SK-N-SH (cell line): ENCODE measurements at regions of chr4 and their contacts with region 1.

Region 1: GRCh38 chr4:37603070-37603468 is 83.1 kb downstream of the RELL1 start:
- DNase-seq: peak; percentile 85
- H3K4me3 ChIP-seq: peak overlapping the region in 1 of 2 experiments; percentile 10; a peak in 1 of 4 replicates
- H3K27ac ChIP-seq: no peak overlapping the region
- H3K4me1 ChIP-seq: peaks cover 4% of the 10 kb centered on the region in 2 experiments; a peak in 1 of 4 replicates
- H3K27me3 ChIP-seq: no peaks in the 10 kb centered on the region
- CTCF ChIP-seq: peak; percentile 96
- EP300 ChIP-seq: no peak
- RAD21 ChIP-seq: peak; percentile 96

Region 2: GRCh38 chr4:37324546-37324945 is 278.5 kb before region 1 on chr4:
- CTCF ChIA-PET with region 1: no interaction called
- POLR2A ChIA-PET with region 1: no interaction called
- DNase-seq: no peak
- H3K4me3 ChIP-seq: no peak overlapping the region
- H3K27ac ChIP-seq: no peak overlapping the region
- H3K4me1 ChIP-seq: no peaks in the 10 kb centered on the region
- H3K27me3 ChIP-seq: no peaks in the 10 kb centered on the region
- CTCF ChIP-seq: no peak
- EP300 ChIP-seq: no peak
- RAD21 ChIP-seq: no peak

Region 3: DNA sequence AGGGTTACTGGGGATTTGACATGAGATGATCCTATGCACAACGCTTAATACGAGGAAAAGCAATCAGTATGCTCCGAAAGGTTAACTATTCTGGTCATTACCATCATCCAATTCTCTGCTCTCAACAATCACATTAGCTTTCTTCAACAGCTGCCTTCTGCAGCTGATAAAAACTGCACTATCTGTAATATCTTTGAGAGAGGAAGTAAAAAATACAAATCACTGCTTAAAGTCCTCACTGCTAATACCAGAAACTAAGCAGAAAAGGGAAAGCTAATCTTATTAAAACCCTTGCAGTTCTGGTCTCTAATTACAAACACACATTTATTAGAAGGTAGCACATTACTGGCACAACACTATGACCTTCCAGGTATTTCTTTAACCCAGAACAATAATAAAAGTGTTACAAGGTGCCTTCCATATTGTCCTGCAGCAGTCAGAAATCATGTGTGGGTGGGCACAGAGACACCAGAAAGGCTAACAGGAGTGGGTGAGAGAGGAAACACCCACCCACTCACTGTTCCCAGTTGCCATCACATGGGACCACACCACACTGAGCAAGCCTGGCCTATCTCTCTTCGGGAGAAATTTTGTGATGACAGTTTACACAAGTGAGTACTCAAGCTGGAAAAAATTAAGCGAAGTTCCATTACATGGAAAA is 12.1 kb after region 1 on chr4:
- CTCF ChIA-PET with region 1: interaction called, 55 read pairs
- POLR2A ChIA-PET with region 1: no interaction called
- DNase-seq: peak; percentile 69
- H3K4me3 ChIP-seq: no peak overlapping the region
- H3K27ac ChIP-seq: peak overlapping the region in 1 of 2 experiments; percentile 95; a peak in 2 of 4 replicates
- H3K4me1 ChIP-seq: peaks cover 0 to 28% of the 10 kb centered on the region in 2 experiments; a peak in 3 of 4 replicates
- H3K27me3 ChIP-seq: no peaks in the 10 kb centered on the region
- CTCF ChIP-seq: no peak
- EP300 ChIP-seq: peak in 1 of 2 experiments; percentile 88; a peak in 2 of 4 replicates
- RAD21 ChIP-seq: peak; percentile 7; the same call in 1 of the 2 replicates

Region 4: GRCh38 chr4:37780444-37781150 is 177.5 kb after region 1 on chr4:
- CTCF ChIA-PET with region 1: interaction called, 10 read pairs
- POLR2A ChIA-PET with region 1: no interaction called
- DNase-seq: no peak
- H3K4me3 ChIP-seq: no peak overlapping the region
- H3K27ac ChIP-seq: no peak overlapping the region
- H3K4me1 ChIP-seq: no peaks in the 10 kb centered on the region
- H3K27me3 ChIP-seq: no peaks in the 10 kb centered on the region; the same call in 1 of the 2 replicates
- CTCF ChIP-seq: no peak
- EP300 ChIP-seq: no peak
- RAD21 ChIP-seq: peak; percentile 26; the same call in 1 of the 2 replicates

Region 5: GRCh38 chr4:37788819-37789218 is 185.8 kb after region 1 on chr4:
- CTCF ChIA-PET with region 1: interaction called, 201 read pairs
- POLR2A ChIA-PET with region 1: no interaction called
- DNase-seq: no peak
- H3K4me3 ChIP-seq: no peak overlapping the region
- H3K27ac ChIP-seq: no peak overlapping the region
- H3K4me1 ChIP-seq: no peaks in the 10 kb centered on the region
- H3K27me3 ChIP-seq: peaks cover 15% of the 10 kb centered on the region; the same call in 1 of the 2 replicates
- CTCF ChIP-seq: no peak
- EP300 ChIP-seq: no peak
- RAD21 ChIP-seq: no peak

Region 6: DNA sequence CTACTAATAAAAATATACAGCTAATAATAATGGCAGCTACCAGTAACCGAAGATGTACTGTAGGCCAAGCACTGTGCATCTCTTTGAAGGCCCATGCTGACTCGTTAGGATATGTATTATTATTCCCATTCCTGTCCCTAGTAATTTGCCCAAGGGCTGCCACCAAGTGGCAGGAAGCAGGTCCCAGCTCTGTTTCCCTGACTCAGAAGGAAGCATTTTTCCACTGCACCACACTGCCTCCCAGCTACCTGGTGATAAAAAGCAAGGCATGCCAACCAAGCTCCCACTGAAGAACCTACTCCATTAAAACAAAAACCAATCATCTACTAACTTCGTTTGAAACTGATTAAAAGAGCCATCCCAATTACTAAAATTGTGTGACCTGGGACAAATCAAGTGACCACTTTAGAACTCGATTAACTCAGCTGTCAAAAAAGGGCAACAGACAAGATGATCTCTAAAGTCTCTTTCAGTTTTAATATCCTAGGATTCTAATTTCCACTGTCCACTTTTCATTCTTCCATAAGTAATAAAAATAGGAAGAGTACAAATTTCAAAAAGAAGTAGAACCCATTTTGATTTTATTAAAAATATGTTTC is 199.1 kb after region 1 on chr4:
- CTCF ChIA-PET with region 1: interaction called, 201 read pairs
- POLR2A ChIA-PET with region 1: no interaction called
- DNase-seq: peak; percentile 63
- H3K4me3 ChIP-seq: no peak overlapping the region; a peak in 1 of 4 replicates
- H3K27ac ChIP-seq: no peak overlapping the region
- H3K4me1 ChIP-seq: no peaks in the 10 kb centered on the region
- H3K27me3 ChIP-seq: no peaks in the 10 kb centered on the region
- CTCF ChIP-seq: peak; percentile 70
- EP300 ChIP-seq: peak in 1 of 2 experiments; percentile 21; a peak in 1 of 4 replicates
- RAD21 ChIP-seq: peak; percentile 91

Region 7: GRCh38 chr4:38030023-38030422 is 427.0 kb after region 1 on chr4:
- CTCF ChIA-PET with region 1: interaction called, 29 read pairs
- POLR2A ChIA-PET with region 1: no interaction called
- DNase-seq: no peak
- H3K4me3 ChIP-seq: no peak overlapping the region
- H3K27ac ChIP-seq: no peak overlapping the region; a peak in 1 of 4 replicates
- H3K4me1 ChIP-seq: no peaks in the 10 kb centered on the region; a peak in 1 of 4 replicates
- H3K27me3 ChIP-seq: no peaks in the 10 kb centered on the region
- CTCF ChIP-seq: no peak
- EP300 ChIP-seq: no peak
- RAD21 ChIP-seq: no peak

Region 8: GRCh38 chr4:38034986-38035882 is 432.2 kb after region 1 on chr4:
- CTCF ChIA-PET with region 1: interaction called, 29 read pairs
- POLR2A ChIA-PET with region 1: no interaction called
- DNase-seq: peak; percentile 59
- H3K4me3 ChIP-seq: no peak overlapping the region; a peak in 1 of 4 replicates
- H3K27ac ChIP-seq: no peak overlapping the region
- H3K4me1 ChIP-seq: no peaks in the 10 kb centered on the region
- H3K27me3 ChIP-seq: no peaks in the 10 kb centered on the region
- CTCF ChIP-seq: peak; percentile 79
- EP300 ChIP-seq: no peak
- RAD21 ChIP-seq: peak; percentile 78